ENCODE measurements at regions of chr4 and their contacts with region 1.

Region 1: DNA sequence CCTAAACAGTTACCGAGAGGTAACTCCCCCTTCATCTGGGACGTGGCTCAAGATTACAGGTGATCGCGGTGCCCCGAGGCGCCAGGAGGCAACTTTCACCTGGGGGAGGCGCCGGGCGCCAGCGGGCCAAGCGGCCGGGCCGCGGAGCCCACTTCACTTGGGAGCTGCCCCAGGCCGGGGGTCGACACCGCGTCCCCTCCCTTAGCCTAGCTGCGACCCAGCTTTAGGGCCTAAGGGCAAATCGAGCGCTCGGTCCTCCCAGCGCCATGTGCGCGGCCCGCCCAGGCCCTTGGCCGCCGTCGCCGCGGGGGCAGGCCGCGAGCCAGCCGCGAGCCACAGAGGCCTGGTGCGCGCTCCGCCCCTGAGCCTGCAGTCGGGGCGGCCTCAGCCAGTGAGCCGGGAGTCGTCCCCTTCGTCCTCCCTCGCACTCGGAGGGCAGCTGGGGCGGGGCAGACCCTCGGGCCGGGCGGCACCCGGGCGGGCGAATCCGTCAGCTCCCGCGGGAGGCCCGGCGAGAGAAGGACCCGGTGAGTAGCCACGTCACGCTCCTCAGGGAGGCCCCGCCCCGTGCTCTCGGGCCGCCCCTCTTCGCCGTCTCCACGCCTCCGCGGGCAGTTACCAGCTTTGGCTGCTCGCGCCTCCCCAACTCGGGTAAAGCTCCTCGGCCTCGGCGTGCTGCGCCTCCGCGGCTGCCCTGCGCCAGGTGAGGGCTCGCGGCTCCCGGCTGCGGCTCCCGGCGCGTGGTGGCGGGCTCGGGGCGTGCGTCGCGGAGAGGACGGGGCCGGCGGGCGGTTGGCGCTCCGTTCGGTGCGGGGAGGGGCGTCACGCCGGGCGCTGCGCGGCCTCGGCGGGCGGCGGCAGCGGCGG is at the start of gene LARP1B:
- DNase-seq: peak; percentile 98
- H3K4me3 Mint-ChIP-seq: peak within 1 kb of the TSS; percentile 90
- H3K27ac Mint-ChIP-seq: peak within 1 kb of the TSS; percentile 94
- H3K4me1 Mint-ChIP-seq: peaks cover 11% of the 10 kb centered on the region
- H3K27me3 Mint-ChIP-seq: peaks cover 3% of the 10 kb centered on the region
- total RNA-seq, gene LARP1B: 31.1 and 32.6 TPM in 2 replicates

Region 2: GRCh38 chr4:127782274-127783025 is 278.5 kb before region 1 on chr4 and contains the start of gene HSPA4L:
- intact Hi-C with region 1: loop called (anchors 2 kb)
- DNase-seq: peak; percentile 89
- H3K4me3 Mint-ChIP-seq: peak within 1 kb of the TSS; percentile 94
- H3K27ac Mint-ChIP-seq: peak within 1 kb of the TSS; percentile 91
- H3K4me1 Mint-ChIP-seq: peaks cover 18% of the 10 kb centered on the region
- H3K27me3 Mint-ChIP-seq: peaks cover 72% of the 10 kb centered on the region
- total RNA-seq, gene HSPA4L: 1.3 and 1.7 TPM in 2 replicates

Region 3: GRCh38 chr4:128354205-128354821 is 293.4 kb after region 1 on chr4:
- intact Hi-C with region 1: no loop called
- DNase-seq: no peak
- H3K4me3 Mint-ChIP-seq: no peak overlapping the region
- H3K27ac Mint-ChIP-seq: no peak overlapping the region
- H3K4me1 Mint-ChIP-seq: peaks cover 3% of the 10 kb centered on the region
- H3K27me3 Mint-ChIP-seq: no peaks in the 10 kb centered on the region